Sciatic nerve (tissue), 2 donors: ENCODE measurements at regions of chr17 and their contacts with region 1.

Region 1: DNA sequence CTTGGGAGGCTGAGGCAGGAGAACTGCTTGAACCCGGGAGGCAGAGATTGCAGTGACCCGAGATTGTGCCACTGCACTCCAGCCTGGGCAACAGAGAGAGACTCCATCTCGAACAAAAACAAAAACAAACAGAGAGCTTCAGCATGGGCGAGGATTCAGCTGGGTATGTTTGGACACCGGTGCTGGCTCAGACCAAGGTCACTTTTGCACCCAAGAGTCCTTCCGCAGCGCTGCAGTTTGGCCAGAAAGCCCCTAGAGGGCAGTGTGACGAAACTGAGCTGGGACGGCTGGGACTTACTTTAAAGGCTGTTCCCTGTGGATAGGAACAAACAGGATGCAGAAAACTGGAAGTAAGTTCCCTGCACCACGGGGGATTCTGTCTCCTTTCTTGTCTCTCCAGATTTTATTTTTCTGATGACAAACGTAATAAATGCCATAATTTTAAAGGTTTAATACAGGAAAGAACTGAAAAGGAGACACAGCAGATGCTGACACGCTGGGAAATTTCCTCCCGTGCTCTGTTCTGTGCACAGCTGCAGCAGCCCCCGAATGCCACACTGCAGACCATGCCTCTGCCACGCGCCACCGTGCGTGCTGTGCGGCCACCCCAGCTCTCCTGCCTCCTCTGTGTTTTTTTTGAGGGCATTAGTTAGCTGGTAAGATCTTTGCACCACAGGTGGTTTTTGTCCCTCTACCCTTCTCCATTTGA is 25.2 kb upstream of the USP36 start:
- DNase-seq: peak; percentile 87
- ATAC-seq: peak; percentile 53

Region 2: GRCh38 chr17:78828470-78829185 is 37.2 kb before region 1 on chr17:
- intact Hi-C with region 1: no loop called
- DNase-seq: no peak
- ATAC-seq: no peak

Region 3: GRCh38 chr17:78953356-78954265 is 87.8 kb after region 1 on chr17:
- intact Hi-C with region 1: no loop called
- DNase-seq: no peak
- ATAC-seq: peak; percentile 65

Region 4: DNA sequence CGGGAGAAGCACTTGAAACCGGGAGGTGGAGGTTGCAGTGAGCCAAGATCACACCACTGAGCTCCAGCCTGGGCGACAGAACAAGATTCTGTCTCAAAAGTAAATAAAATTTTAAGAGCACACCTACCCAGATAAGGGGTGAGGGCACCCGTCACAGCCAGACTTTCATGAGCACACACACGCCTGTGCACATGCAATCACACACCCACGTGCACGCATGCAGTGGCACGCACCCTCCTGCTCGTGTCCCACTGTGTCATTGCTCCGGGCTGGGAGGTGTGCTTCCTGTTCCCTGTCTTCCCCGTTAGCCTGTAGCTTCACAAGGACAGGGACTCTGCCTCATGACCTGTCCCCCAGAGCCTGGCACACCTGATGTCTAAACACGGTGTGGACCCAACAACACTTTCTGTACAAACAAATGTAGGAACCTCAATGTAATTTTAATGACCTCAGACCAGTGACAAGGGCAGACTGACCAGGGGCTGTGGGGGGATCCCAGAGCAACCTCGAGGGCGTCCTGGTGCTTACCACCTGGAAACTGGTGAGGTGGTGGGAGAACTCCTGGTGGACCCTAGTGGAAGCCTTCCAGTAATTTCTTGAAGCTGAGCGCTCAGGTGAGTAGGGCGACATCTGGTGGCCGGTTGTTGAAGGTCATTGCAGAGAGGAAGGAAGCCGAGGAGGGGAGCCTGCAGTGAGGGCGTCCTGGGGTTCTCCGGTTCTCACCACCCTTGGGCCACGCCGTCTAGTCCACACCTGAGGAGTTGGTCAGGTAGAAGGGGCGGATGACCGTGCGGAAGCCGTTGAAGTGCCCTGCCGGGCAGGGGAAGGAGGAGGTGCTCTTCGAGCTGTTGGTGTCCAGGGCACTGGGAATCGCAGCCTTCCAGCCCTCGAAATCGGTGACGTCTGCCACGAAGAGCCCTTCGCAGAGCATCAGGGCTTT is 105.3 kb after region 1 on chr17:
- intact Hi-C with region 1: loop called (anchors 5 kb)
- DNase-seq: peak; percentile 94
- ATAC-seq: peak; percentile 50

Region 5: DNA sequence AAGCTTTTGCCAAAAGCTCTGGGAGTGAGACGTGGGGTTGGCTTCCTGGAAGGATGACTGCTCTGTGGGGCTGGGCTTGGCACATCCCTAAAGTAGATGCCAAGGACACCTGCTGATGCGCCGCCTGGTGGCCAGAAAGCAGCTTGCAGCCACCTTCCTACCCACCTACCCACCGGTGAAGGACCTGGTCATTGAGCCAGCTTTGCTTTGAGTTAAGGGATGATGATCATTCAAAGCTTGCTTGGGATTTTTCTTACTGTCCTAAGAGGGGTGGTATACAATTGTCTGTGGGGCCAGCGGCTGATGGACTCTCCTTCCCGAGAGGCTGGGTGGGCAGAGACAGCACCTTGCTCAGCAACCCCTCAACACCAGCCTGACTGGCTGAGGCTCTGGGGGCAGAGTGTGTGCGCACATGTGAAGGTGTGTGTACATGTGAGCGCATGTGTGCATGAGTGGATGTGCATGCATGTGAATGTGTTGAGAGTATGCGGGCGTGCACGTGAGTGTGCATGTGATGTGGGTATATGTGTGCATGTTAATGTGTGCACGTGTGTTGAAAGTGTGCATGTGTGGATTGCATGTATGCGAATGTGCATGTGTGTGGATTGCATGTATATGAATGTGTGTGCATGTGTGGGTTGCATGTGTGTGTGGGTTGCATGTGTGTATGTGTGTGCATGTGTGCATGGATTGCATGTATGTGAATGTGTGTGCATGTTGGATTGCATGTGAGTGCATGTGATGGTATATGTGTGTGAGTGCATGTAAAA is 176.8 kb after region 1 on chr17:
- intact Hi-C with region 1: no loop called
- DNase-seq: peak; percentile 81
- ATAC-seq: no peak